Sciatic nerve (tissue), 2 donors: ENCODE measurements at regions of chr3 and their contacts with region 1.

Region 1: GRCh38 chr3:104396974-104397669 is 969.6 kb upstream of the ALCAM start:
- DNase-seq: no peak
- ATAC-seq: peak; percentile 94

Region 2: DNA sequence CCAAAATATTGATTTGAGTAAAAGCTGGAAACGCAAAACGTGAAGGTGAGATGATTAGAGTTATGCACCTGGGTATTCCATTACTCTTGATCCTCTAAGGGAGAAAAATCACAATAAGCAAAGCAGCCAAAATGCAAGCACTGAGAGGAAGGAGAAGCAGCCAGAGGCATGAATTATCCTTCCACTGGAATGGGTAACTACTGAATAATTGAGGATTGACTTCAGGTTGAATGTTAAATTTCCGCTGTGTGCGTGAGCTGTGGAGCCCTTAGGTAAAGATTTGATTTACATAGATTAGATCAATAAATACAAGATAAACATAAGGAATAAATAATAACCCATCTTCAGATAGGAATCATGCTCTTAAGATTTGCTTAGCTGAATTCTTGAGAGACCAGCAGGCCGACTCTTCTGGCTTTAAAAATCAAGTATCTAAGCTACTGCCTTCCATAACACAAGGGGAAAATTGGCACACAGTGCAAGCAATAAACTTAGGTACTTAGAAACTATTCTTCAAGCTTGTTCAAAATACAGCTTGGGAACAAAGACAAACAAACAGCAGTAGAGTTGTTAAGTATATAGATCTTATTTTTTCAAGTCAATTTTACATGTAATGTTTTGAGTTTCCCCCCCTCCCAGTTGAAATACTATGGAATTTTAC is 502.8 kb before region 1 on chr3:
- intact Hi-C with region 1: no loop called
- DNase-seq: no peak
- ATAC-seq: no peak

Region 3: DNA sequence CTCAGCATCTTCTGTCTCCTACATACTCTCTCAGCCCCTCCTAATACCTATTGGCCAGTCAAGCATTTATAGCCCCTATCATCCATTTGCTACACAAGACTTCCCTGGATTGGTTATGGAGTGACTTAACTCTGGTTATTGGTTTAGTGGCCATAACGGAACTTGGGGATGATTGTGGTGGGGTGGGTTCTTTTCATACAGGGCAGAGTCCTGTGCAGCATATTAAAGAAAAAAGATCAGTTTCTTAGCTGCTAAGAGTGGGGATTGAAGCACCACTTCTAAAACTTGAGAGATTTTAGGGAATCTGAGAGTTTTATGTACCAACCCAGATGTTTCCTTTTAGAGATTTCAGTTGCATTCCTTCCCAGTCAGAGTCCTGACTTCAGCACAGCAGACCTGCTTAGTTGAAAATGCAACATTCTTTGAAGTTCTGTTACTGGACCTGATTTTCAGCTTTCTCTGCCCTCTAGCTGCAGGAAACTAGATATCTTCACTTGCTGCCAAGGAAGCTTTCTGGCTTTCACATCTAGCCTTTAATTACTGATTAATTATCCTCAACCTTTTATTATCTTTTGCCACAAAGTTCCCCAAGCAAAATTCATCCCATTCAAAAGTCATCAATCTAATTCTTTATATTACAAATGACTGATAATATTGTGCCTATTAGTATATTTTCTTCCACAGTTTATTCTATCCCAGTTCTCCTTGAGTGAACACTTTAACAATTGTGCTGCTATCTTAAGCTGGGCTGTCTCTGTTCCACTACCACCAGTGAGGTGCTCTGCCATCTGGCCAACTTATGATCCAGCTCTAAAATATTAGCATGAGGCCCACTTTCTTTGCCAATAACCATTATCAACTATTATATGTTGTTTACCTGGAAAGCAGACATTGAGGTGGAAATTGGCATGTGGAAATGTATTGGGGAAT is 63.6 kb after region 1 on chr3:
- intact Hi-C with region 1: loop called (anchors 2 kb)
- DNase-seq: no peak
- ATAC-seq: peak; percentile 92